A673 (cell line): ENCODE measurements at regions of chr1 and their contacts with region 1.

Region 1: GRCh38 chr1:60281360-60281932 is 207.9 kb upstream of the C1orf87 start:
- DNase-seq: peak; percentile 90
- H3K4me3 ChIP-seq: no peak overlapping the region
- H3K27ac ChIP-seq: no peak overlapping the region
- H3K4me1 ChIP-seq: no peaks in the 10 kb centered on the region
- H3K27me3 ChIP-seq: no peaks in the 10 kb centered on the region
- CTCF ChIP-seq: peak; percentile 95

Region 2: GRCh38 chr1:59560807-59561450 is 720.5 kb before region 1 on chr1:
- CTCF ChIA-PET with region 1: no interaction called
- POLR2A ChIA-PET with region 1: no interaction called
- intact Hi-C with region 1: no loop called
- DNase-seq: no peak
- H3K4me3 ChIP-seq: no peak overlapping the region
- H3K27ac ChIP-seq: no peak overlapping the region
- H3K4me1 ChIP-seq: no peaks in the 10 kb centered on the region
- H3K27me3 ChIP-seq: no peaks in the 10 kb centered on the region
- CTCF ChIP-seq: no peak

Region 3: GRCh38 chr1:59971464-59971911 is 310.0 kb before region 1 on chr1:
- CTCF ChIA-PET with region 1: interaction called, 4 read pairs
- POLR2A ChIA-PET with region 1: no interaction called
- intact Hi-C with region 1: loop called (anchors 2 kb)
- DNase-seq: peak; percentile 85
- H3K4me3 ChIP-seq: no peak overlapping the region
- H3K27ac ChIP-seq: no peak overlapping the region
- H3K4me1 ChIP-seq: no peaks in the 10 kb centered on the region
- H3K27me3 ChIP-seq: peaks cover 25% of the 10 kb centered on the region
- CTCF ChIP-seq: peak; percentile 95

Region 4: GRCh38 chr1:60342569-60342968 is 61.1 kb after region 1 on chr1:
- CTCF ChIA-PET with region 1: no interaction called
- POLR2A ChIA-PET with region 1: no interaction called
- intact Hi-C with region 1: no loop called
- DNase-seq: no peak
- H3K4me3 ChIP-seq: no peak overlapping the region
- H3K27ac ChIP-seq: no peak overlapping the region
- H3K4me1 ChIP-seq: no peaks in the 10 kb centered on the region
- H3K27me3 ChIP-seq: peaks cover 57% of the 10 kb centered on the region
- CTCF ChIP-seq: no peak

Region 5: DNA sequence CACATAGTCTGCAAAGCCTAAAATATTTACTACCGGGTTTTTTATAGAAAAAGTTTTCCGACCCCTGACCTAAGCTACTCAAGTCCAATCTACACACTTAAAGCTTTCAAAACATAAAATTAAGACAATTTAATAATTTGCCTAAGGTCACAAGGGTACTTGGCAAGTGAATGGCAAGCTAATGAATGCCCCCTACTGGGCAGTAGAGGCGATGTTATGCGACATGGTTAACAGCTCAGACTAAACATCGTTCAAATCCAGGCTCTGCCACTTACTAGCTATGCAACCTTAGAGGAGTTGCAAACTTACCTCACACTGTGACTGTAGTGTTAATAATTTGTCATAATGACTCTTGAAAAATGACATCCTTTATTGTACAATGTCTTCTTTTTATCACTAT is 483.8 kb after region 1 on chr1:
- CTCF ChIA-PET with region 1: interaction called, 10 read pairs
- POLR2A ChIA-PET with region 1: no interaction called
- intact Hi-C with region 1: loop called (anchors 5 kb)
- DNase-seq: peak; percentile 52
- H3K4me3 ChIP-seq: no peak overlapping the region
- H3K27ac ChIP-seq: no peak overlapping the region
- H3K4me1 ChIP-seq: no peaks in the 10 kb centered on the region
- H3K27me3 ChIP-seq: peaks cover 73% of the 10 kb centered on the region
- CTCF ChIP-seq: peak; percentile 70

Region 6: DNA sequence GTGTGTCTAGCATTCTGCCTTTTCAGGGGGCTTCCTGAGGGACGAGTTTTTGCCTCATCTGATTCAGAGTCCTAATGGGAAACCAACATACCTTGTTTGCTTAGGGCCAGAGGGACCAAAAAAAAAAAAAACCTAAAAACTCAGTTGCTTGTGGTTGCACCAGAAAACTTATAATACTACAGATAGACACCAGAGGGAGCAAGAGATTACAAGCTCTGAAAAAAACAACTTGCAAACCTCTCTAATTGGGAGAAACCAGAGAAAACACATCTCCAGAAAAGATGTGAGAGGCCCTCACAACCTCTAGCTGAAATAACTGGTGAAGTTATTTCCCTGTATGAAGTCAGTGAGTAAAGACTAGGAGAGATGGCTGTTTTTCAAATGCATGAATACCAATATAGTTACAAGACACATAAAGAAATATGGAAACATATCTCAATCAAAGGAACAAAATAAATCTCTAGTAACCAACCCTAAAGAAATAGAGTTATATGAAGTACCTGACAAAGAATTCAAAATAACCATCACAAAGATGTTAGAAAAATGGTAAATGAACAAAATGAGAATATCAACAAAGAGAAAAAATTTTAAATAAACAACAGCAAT is 567.2 kb after region 1 on chr1:
- CTCF ChIA-PET with region 1: interaction called, 9 read pairs
- POLR2A ChIA-PET with region 1: no interaction called
- intact Hi-C with region 1: loop called (anchors 5 kb)
- DNase-seq: peak; percentile 68
- H3K4me3 ChIP-seq: no peak overlapping the region
- H3K27ac ChIP-seq: no peak overlapping the region
- H3K4me1 ChIP-seq: no peaks in the 10 kb centered on the region
- H3K27me3 ChIP-seq: no peaks in the 10 kb centered on the region
- CTCF ChIP-seq: peak; percentile 69